HEK293 (cell line): ENCODE measurements at regions of chr18 and their contacts with region 1.

Region 1: DNA sequence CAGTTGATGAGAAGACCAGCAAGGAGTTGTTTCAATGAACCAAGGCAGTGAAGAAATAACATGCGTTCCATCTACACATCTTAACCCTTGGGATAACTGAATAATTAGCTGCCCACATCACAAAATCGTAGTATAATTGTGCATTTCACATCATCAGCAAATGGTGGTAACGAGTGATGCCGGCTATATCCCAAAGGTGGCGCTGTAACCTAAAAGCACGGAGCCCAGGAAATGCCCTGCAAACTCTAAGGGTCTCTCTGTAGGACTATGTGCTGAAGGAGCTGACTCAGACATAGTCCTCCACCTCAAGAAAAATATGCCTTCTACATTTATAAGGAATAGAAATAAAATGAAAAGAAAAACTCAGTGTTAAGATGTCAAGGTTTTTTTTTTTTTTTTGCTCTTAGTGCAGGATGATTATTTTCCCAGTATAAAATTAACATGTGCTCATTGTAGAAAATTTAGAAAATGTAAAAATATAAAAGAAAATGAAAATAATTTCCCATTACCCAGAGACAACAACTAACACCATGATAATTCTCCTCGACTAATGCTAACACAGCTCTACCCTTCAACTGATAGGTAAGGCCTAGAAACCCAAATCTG is 23.1 kb upstream of the DSG3 start:
- H3K4me3 ChIP-seq: no peak overlapping the region
- H3K27ac ChIP-seq: no peak overlapping the region
- H3K4me1 ChIP-seq: no peaks in the 10 kb centered on the region
- CTCF ChIP-seq: peak; percentile 57

Region 2: DNA sequence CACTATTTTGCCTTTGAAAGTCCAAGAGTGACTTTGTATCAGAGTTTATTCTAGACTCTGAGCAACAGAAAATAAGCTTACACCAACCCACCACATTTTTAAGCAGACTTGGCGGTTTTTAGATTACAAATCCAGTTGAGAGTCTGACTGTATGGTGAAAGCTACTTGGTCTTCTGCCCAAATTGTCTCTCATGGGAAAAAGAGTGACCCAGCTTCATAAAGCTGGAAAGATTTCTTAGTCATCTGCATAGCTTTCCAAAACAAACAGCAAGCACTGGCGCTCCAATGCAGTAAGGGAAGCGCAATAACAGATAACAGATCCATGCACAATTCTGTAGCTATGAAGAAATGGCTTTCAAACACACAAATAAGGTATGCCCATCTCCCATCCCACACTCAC is 99.4 kb before region 1 on chr18:
- CTCF ChIA-PET with region 1: no interaction called
- POLR2A ChIA-PET with region 1: no interaction called
- H3K4me3 ChIP-seq: no peak overlapping the region
- H3K27ac ChIP-seq: no peak overlapping the region
- H3K4me1 ChIP-seq: no peaks in the 10 kb centered on the region
- CTCF ChIP-seq: no peak

Region 3: GRCh38 chr18:31438402-31438801 is 13.9 kb after region 1 on chr18:
- CTCF ChIA-PET with region 1: interaction called, 26 read pairs
- POLR2A ChIA-PET with region 1: no interaction called
- H3K4me3 ChIP-seq: no peak overlapping the region
- H3K27ac ChIP-seq: no peak overlapping the region
- H3K4me1 ChIP-seq: no peaks in the 10 kb centered on the region
- CTCF ChIP-seq: no peak

Region 4: DNA sequence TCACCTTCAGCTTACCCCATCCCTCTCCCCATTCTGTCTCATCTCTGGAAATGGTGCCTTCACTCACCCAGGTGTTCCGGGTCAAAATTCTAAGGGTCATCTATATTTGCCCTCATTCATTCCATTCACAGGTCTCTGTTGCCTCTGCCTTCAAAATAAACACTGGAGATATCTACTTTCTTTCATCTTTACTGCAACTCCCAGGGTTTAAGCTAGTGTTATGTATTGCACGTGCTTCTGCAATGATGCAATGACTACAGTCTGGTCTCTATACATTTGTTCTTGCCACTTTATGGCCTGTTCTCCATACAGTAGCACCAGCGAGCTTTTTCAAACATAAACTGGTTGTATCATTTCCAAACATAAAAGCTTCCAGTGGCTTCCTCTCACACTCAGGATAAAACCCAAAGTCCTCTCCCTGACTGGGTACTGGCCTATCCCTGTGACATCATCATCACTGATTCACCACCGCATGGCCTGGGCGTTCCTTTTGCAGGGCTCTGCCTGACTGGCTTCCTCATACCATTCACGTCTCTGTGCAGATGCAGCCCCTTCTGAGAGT is 87.8 kb after region 1 on chr18:
- CTCF ChIA-PET with region 1: interaction called, 11 read pairs
- POLR2A ChIA-PET with region 1: no interaction called
- H3K4me3 ChIP-seq: no peak overlapping the region
- H3K27ac ChIP-seq: no peak overlapping the region
- H3K4me1 ChIP-seq: peaks cover 3% of the 10 kb centered on the region; the same call in 1 of the 2 replicates
- CTCF ChIP-seq: no peak

Region 5: GRCh38 chr18:31555971-31556747 is 131.7 kb after region 1 on chr18:
- CTCF ChIA-PET with region 1: interaction called, 62 read pairs
- POLR2A ChIA-PET with region 1: no interaction called
- H3K4me3 ChIP-seq: no peak overlapping the region
- H3K27ac ChIP-seq: no peak overlapping the region
- H3K4me1 ChIP-seq: no peaks in the 10 kb centered on the region
- CTCF ChIP-seq: peak; percentile 70

Region 6: GRCh38 chr18:31626409-31626808 is 201.9 kb after region 1 on chr18:
- CTCF ChIA-PET with region 1: no interaction called
- POLR2A ChIA-PET with region 1: no interaction called
- H3K4me3 ChIP-seq: no peak overlapping the region
- H3K27ac ChIP-seq: no peak overlapping the region
- H3K4me1 ChIP-seq: no peaks in the 10 kb centered on the region
- CTCF ChIP-seq: no peak

Region 7: GRCh38 chr18:31722369-31722957 is 298.0 kb after region 1 on chr18:
- CTCF ChIA-PET with region 1: interaction called, 10 read pairs
- POLR2A ChIA-PET with region 1: no interaction called
- H3K4me3 ChIP-seq: no peak overlapping the region
- H3K27ac ChIP-seq: no peak overlapping the region
- H3K4me1 ChIP-seq: no peaks in the 10 kb centered on the region
- CTCF ChIP-seq: peak; percentile 52; the same call in 1 of the 2 replicates

Region 8: DNA sequence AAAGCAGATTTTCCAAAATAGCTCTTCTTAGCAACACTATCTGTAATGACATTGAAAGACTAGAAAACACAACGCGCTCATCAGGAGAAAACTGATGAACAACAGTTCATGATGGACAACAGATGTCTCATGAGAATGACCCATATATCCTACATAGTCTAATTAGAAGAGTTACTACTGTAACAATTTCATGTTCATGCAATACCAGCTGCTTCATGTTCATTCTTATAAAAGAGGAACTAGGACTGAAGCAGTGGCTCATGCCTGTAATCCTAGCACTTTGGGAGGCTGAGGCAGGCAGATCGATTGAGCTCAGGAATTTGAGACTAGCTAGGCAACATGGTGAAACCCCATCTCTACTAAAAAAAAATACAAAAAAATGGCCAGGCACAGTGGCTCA is 495.8 kb after region 1 on chr18:
- CTCF ChIA-PET with region 1: no interaction called
- POLR2A ChIA-PET with region 1: no interaction called
- H3K4me3 ChIP-seq: no peak overlapping the region
- H3K27ac ChIP-seq: no peak overlapping the region
- H3K4me1 ChIP-seq: no peaks in the 10 kb centered on the region
- CTCF ChIP-seq: no peak